CD4-positive, alpha-beta memory T cell (primary cell): ENCODE measurements at regions of chr19 and their contacts with region 1.

Region 1: DNA sequence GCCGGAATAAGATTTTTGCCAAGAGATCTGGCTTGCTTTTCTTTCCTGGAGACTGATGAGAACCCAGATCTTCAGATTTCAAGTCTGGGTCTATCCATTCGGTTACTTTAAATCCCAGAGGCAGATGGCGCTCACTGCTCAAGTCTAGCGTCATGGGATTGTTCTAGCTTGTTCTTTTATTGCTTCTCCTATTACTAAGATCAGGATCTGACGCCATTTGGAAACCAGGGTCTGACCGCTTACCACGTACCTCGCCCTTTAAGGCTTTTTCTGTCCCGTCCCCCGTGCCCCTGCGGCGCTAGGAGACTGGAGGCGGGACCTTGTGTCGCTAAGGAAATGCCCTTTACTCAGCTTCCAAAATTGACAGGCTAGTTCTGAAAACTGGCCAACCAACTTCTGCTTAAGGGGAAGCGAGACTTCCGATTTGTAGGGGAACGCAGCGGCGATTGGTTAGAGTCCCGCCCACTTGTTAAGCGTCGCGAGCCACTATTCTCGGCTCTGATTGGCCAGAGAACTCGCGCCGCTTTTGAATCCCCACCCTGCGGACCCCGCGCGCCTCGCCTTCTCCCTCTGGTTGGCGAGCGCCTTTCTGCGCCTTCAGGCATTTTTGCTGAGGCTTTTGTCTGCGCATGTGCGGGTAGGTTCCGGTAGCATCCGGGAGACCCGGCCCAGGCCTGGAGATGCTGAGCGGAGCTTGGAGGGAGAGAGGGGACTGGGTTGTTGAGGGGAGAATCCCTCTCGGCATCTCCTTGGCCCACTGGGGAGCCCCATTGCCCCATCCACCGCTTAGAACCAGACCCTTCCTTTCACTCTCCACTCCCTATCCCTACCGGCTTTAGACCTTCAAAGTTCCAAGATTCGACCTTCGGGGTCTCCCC is 3.8 kb upstream of the C19orf84 start:
- DNase-seq: peak; percentile 88 to 92 (median 89)
- H3K4me3 ChIP-seq: peak overlapping the region; percentile 55 to 76
- H3K4me3 Mint-ChIP-seq: peak overlapping the region; percentile 85 to 94 (median 90)
- H3K27ac ChIP-seq: peak overlapping the region; percentile 24
- H3K27ac Mint-ChIP-seq: peak overlapping the region; percentile 88 to 95 (median 94)
- H3K4me1 ChIP-seq: peaks cover 13% of the 10 kb centered on the region
- H3K4me1 Mint-ChIP-seq: peaks cover 11 to 30% (median 20%) of the 10 kb centered on the region in 4 donors
- H3K27me3 ChIP-seq: no peaks in the 10 kb centered on the region
- H3K27me3 Mint-ChIP-seq: no peaks in the 10 kb centered on the region

Region 2: DNA sequence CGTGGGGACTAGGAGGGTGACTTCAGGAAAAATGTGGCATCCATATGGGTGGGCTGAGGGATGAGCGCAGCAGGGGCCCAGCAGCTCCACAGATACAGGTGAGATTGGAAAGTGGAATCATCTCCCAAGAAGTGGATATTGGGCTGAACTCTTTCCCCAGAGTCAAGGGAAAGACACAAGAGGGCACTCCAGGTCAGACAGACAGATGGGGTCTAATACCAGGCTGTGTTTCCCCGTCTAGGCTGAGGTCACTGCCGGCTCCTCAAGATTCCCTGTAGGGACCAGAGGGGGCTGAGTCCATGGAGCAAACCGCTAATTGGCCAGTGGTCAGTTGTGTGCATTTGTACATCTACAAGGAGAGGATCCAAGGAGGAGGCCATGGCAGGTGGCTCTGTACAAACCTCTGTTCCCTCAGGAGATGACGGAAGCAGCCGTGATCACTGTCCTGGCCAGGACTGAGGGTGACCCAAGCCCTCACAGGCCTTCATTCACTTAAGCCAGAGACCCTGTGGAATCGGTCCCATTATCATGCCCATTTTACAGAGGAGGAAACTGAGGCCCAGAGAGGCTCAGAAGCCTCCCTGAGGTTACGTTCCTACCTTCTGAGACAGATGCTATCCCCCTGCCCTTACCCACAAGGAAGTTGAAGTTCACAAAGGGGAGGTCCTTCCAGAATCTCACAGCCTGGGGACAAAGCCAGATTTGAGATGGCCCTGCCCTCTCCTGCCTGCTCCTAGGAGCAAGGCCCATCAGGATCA is 97.7 kb before region 1 on chr19:
- CTCF ChIA-PET with region 1: no interaction called
- POLR2A ChIA-PET with region 1: no interaction called
- intact Hi-C with region 1: no loop called
- DNase-seq: no peak
- H3K4me3 ChIP-seq: no peak overlapping the region
- H3K4me3 Mint-ChIP-seq: no peak overlapping the region
- H3K27ac ChIP-seq: no peak overlapping the region
- H3K27ac Mint-ChIP-seq: no peak overlapping the region
- H3K4me1 ChIP-seq: no peaks in the 10 kb centered on the region
- H3K4me1 Mint-ChIP-seq: no peaks in the 10 kb centered on the region
- H3K27me3 ChIP-seq: no peaks in the 10 kb centered on the region
- H3K27me3 Mint-ChIP-seq: peaks cover 13% of the 10 kb centered on the region in 2 donors

Region 3: GRCh38 chr19:51347209-51347928 is 46.8 kb before region 1 on chr19:
- CTCF ChIA-PET with region 1: no interaction called
- POLR2A ChIA-PET with region 1: no interaction called
- intact Hi-C with region 1: no loop called
- DNase-seq: no peak
- H3K4me3 ChIP-seq: no peak overlapping the region
- H3K4me3 Mint-ChIP-seq: no peak overlapping the region
- H3K27ac ChIP-seq: no peak overlapping the region
- H3K27ac Mint-ChIP-seq: peak overlapping the region in 1 of 7 donors; percentile 3
- H3K4me1 ChIP-seq: no peaks in the 10 kb centered on the region
- H3K4me1 Mint-ChIP-seq: peaks cover 0 to 4% (median 2%) of the 10 kb centered on the region in 4 donors
- H3K27me3 ChIP-seq: no peaks in the 10 kb centered on the region
- H3K27me3 Mint-ChIP-seq: no peaks in the 10 kb centered on the region

Region 4: DNA sequence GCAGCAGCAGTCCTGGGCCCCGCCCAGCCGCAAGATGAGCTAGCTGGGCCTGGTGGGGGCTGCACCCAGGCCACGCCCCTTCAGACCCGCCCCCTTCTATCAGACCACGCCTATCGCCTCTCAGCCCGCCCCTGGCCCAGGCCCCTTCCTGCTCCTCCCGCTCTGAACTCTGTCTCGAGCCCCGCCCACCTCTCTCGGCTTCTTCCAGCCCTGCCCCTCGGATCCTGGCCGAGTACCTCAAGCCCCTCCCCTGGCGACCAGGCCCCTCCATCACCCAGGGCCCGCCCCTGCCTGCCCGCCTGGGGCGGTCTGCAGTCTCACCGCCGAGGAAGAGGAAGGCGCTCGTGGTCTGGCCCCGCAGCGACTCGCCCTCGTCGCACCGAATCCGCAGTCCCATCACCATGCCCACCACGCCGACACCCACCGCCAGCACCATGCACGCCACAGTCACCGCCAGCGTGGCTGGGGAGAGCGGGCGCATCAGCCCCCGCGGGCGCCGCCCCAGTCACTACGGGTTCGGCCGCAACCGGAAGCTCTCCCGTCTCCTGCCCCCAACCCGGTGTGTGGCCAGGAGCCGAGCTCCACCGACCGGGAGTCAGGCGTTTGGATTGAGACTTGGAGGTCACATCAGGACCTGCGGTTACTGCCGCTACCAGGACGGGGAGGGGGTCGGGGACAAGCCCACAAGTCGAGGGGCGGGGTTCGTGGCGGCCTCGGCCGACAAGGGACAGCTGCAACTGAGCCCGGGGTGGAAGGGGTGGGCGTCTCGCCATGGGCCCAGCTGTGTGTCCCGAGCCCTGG is 26.4 kb before region 1 on chr19:
- CTCF ChIA-PET with region 1: interaction called, 10 read pairs
- POLR2A ChIA-PET with region 1: interaction called, 15 read pairs
- intact Hi-C with region 1: loop called (anchors 1 kb)
- DNase-seq: peak; percentile 89 to 95 (median 91)
- H3K4me3 ChIP-seq: peak overlapping the region; percentile 83 to 85
- H3K4me3 Mint-ChIP-seq: peak overlapping the region; percentile 92 to 100 (median 98)
- H3K27ac ChIP-seq: peak overlapping the region; percentile 77
- H3K27ac Mint-ChIP-seq: peak overlapping the region; percentile 87 to 98 (median 96)
- H3K4me1 ChIP-seq: peaks cover 67% of the 10 kb centered on the region
- H3K4me1 Mint-ChIP-seq: peaks cover 49 to 88% (median 64%) of the 10 kb centered on the region in 4 donors
- H3K27me3 ChIP-seq: no peaks in the 10 kb centered on the region
- H3K27me3 Mint-ChIP-seq: no peaks in the 10 kb centered on the region

Region 5: DNA sequence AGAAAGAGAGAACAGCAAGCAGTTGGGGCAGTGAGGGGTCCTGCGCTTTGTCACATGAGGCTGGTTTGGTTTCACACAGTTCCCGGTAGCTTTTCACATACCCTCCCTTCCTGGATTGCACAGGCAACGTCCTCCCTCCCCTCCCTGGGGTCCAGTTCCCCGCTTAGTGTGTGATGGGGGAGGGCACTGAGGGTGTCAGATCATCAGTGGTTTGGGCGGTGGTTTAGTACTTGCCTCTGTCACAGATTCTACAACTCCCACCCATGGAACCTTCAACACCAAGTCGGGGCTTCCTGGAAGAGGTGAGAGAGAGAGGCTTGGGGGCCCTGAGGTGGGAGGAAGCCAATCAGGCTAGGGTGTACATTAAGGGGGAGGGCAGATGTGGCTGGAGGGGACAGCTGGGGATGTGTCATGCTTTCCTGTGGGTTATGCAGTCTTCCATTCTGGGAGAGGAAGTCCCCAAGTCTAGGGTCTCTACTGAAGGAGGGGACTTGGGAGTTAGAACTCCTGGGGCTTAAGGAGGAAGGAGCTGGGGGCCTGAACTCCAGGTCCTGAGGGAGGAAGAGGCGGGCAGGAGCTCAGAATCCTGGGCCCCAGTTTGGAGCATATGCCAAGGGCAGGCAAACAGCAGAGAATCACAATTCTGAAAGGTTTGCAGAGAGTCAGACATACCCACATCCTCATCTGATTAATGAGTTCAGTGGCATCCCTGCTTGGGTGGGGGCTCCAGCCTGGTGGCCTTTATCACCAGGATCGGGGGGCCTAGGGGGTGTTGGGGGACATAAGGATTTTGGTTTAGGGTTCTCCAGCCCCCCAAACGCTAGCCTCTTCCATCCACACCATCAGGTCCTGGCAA is 21.3 kb before region 1 on chr19 and contains the start of gene NKG7:
- CTCF ChIA-PET with region 1: interaction called, 10 read pairs
- POLR2A ChIA-PET with region 1: interaction called, 15 read pairs
- intact Hi-C with region 1: no loop called
- DNase-seq: peak; percentile 45 to 87 (median 51)
- H3K4me3 ChIP-seq: peak within 1 kb of the TSS; percentile 21 to 27
- H3K4me3 Mint-ChIP-seq: peak within 1 kb of the TSS; percentile 7 to 78 (median 65)
- H3K27ac ChIP-seq: peak within 1 kb of the TSS; percentile 66
- H3K27ac Mint-ChIP-seq: peak within 1 kb of the TSS; percentile 87 to 96 (median 92)
- H3K4me1 ChIP-seq: peaks cover 68% of the 10 kb centered on the region
- H3K4me1 Mint-ChIP-seq: peaks cover 44 to 79% (median 61%) of the 10 kb centered on the region in 4 donors
- H3K27me3 ChIP-seq: no peaks in the 10 kb centered on the region
- H3K27me3 Mint-ChIP-seq: no peaks in the 10 kb centered on the region
- total RNA-seq, gene NKG7: 2.7 to 2.8 TPM

Region 6: DNA sequence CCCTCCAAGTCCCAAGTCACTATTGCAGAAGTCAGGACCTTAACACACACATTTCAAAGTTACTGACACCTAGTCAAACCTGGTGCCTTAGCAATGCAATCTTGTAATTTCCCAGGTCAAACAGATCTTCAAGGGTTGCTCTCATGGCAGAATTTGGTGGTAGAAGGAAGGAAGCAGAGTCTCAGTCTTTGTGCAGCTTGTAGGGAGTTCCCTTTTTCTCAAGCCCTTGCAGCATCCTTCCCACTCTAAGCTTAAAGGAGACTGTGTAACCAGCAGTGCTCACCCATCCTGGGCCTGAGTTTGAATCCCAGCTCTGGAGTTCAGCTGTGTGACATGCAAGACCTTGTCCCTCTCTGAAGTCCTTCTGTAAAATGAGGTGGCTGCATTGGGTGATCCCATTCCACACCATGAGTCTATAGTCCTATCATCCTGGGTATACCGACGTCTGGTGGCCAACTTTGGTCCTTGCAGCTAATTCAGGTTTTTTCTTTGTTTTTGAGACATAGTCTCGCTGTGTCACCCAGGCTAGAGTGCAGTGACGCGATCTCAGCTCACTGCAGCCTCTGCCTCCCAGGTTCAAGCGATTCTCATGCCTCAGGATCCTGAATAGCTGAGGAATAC is 13.4 kb after region 1 on chr19:
- CTCF ChIA-PET with region 1: no interaction called
- POLR2A ChIA-PET with region 1: no interaction called
- intact Hi-C with region 1: no loop called
- DNase-seq: peak in 4 of 5 donors; percentile 13 to 30 (median 24)
- H3K4me3 ChIP-seq: no peak overlapping the region
- H3K4me3 Mint-ChIP-seq: no peak overlapping the region
- H3K27ac ChIP-seq: no peak overlapping the region
- H3K27ac Mint-ChIP-seq: no peak overlapping the region
- H3K4me1 ChIP-seq: no peaks in the 10 kb centered on the region
- H3K4me1 Mint-ChIP-seq: peaks cover 0 to 2% (median 0%) of the 10 kb centered on the region in 4 donors
- H3K27me3 ChIP-seq: no peaks in the 10 kb centered on the region
- H3K27me3 Mint-ChIP-seq: peaks cover 4 to 5% of the 10 kb centered on the region in 2 donors

Region 7: DNA sequence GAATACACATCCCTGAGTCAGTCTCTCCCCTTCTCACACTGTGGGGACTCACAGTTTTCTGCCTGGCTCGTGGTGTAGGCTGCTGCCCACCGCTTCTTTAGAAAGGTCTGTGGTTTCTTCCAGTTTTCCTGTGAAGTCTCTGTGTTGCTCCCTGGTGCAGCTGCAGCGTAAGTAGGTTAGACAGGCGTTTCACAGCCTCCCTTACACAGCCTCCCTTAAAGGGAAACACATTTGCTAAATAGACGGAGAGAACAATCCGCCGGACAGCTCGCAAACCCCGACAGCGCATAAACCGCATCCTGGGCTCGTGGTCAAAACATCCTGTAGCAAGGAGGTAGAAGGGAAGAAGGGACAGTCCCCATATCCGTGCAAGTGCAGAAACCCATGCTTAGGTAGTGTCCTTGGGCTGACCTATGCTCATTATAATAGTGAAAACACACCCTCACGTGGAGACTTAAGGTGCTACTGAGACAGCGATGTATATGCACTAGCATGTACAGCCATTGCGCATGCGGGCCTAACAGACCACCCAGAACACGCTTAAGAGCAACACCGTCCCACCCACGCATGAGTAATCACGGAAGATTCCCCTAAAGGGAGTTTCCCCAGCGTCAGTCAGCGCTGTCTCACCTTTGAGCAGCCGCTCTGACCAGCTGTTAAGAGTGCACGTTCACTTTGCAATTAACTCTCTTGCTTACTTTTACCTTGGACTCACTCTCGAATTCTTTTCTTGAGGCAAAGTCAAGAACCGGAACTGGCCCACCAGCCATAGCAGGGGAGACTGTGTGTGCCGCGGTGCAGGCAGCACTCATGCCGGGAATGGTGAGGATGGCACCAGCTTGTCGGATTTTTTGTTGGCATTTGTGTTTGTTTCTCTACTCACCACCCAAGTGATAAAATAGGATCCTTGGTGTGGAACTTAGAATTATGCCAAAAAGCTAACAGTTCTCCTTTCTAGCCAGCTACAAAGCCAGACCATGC is 47.5 kb after region 1 on chr19:
- CTCF ChIA-PET with region 1: interaction called, 4 read pairs
- POLR2A ChIA-PET with region 1: interaction called, 8 read pairs
- intact Hi-C with region 1: loop called (anchors 1 kb)
- DNase-seq: peak; percentile 81 to 95 (median 85)
- H3K4me3 ChIP-seq: peak overlapping the region; percentile 17 to 36
- H3K4me3 Mint-ChIP-seq: peak overlapping the region; percentile 73 to 91 (median 84)
- H3K27ac ChIP-seq: peak overlapping the region; percentile 70
- H3K27ac Mint-ChIP-seq: peak overlapping the region; percentile 85 to 98 (median 94)
- H3K4me1 ChIP-seq: peaks cover 47% of the 10 kb centered on the region
- H3K4me1 Mint-ChIP-seq: peaks cover 24 to 48% (median 36%) of the 10 kb centered on the region in 4 donors
- H3K27me3 ChIP-seq: no peaks in the 10 kb centered on the region
- H3K27me3 Mint-ChIP-seq: peaks cover 3 to 5% of the 10 kb centered on the region in 2 donors

Region 8: GRCh38 chr19:51525686-51526085 is 131.5 kb after region 1 on chr19:
- CTCF ChIA-PET with region 1: no interaction called
- POLR2A ChIA-PET with region 1: no interaction called
- intact Hi-C with region 1: no loop called
- DNase-seq: no peak
- H3K4me3 ChIP-seq: no peak overlapping the region
- H3K4me3 Mint-ChIP-seq: no peak overlapping the region
- H3K27ac ChIP-seq: no peak overlapping the region
- H3K27ac Mint-ChIP-seq: no peak overlapping the region
- H3K4me1 ChIP-seq: no peaks in the 10 kb centered on the region
- H3K4me1 Mint-ChIP-seq: no peaks in the 10 kb centered on the region
- H3K27me3 ChIP-seq: peaks cover 3% of the 10 kb centered on the region
- H3K27me3 Mint-ChIP-seq: peaks cover 8 to 33% of the 10 kb centered on the region in 2 donors